HCT116 (cell line): ENCODE measurements at regions of chr15 and their contacts with region 1.

Region 1: GRCh38 chr15:77607111-77607893 is 25.4 kb downstream of the LINGO1 start:
- DNase-seq: no peak
- ATAC-seq: peak; percentile 26; the same call in 1 of the 2 replicates
- H3K4me3 ChIP-seq: no peak overlapping the region
- H3K27ac ChIP-seq: no peak overlapping the region
- H3K4me1 ChIP-seq: peaks cover 5 to 52% of the 10 kb centered on the region in 2 experiments; a peak in 3 of 4 replicates
- H3K27me3 ChIP-seq: no peaks in the 10 kb centered on the region
- CTCF ChIP-seq: no peak
- POLR2A ChIP-seq: no peak
- RAD21 ChIP-seq: no peak

Region 2: DNA sequence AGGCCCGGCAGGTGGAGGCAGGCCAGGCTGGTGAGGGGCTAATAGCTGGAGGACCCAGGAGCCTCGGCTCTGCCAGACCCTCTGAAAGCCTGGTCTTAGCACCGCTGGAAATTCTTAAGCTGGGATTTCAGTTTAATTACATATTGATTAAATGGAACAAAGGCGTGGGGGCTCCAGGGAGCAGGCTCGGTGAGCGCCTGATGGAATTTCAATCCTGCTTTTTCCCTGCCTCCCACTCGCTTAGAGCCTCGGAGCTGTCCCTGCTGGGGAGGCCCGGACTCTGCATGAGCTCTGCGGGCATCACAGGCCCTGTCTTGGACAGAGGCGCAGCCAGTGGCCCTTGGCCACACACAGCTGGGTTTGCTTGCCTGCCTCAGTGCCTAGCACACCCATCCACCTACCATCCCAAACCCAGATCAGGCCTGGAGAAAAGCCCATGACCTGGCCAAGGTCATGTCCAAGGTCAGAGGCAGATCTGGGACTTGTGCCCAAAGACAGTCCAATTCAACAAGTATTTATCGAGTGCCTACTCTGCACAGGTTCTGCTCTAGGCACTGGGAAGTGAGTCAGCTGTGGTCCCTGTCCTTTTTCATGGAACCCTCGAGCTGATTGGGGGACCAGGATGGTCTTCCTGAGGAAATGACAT is 15.2 kb before region 1 on chr15:
- CTCF ChIA-PET with region 1: no interaction called
- POLR2A ChIA-PET with region 1: no interaction called
- RAD21 ChIA-PET with region 1: no interaction called
- intact Hi-C with region 1: no loop called
- DNase-seq: no peak
- ATAC-seq: no peak
- H3K4me3 ChIP-seq: no peak overlapping the region
- H3K27ac ChIP-seq: no peak overlapping the region
- H3K4me1 ChIP-seq: no peaks in the 10 kb centered on the region
- H3K27me3 ChIP-seq: no peaks in the 10 kb centered on the region
- CTCF ChIP-seq: no peak
- POLR2A ChIP-seq: no peak
- RAD21 ChIP-seq: no peak

Region 3: GRCh38 chr15:77617476-77618230 is 10.4 kb after region 1 on chr15:
- CTCF ChIA-PET with region 1: interaction called, 18 read pairs
- POLR2A ChIA-PET with region 1: no interaction called
- RAD21 ChIA-PET with region 1: no interaction called
- intact Hi-C with region 1: no loop called
- DNase-seq: peak; percentile 13
- ATAC-seq: peak; percentile 89
- H3K4me3 ChIP-seq: no peak overlapping the region
- H3K27ac ChIP-seq: no peak overlapping the region
- H3K4me1 ChIP-seq: peaks cover 0 to 3% of the 10 kb centered on the region in 2 experiments; a peak in 2 of 4 replicates
- H3K27me3 ChIP-seq: no peaks in the 10 kb centered on the region
- CTCF ChIP-seq: peak; percentile 42 to 82 (median 79); a peak in 5 of 6 replicates
- POLR2A ChIP-seq: no peak
- RAD21 ChIP-seq: peak; percentile 30